ENCODE measurements at regions of chr22 and their contacts with region 1.

Region 1: GRCh38 chr22:46122511-46122971 is 27.8 kb upstream of the PPARA start:
- DNase-seq: peak; percentile 56
- H3K4me3 Mint-ChIP-seq: no peak overlapping the region
- H3K27ac Mint-ChIP-seq: no peak overlapping the region
- H3K4me1 Mint-ChIP-seq: no peaks in the 10 kb centered on the region
- H3K27me3 Mint-ChIP-seq: peaks cover 2% of the 10 kb centered on the region

Region 2: GRCh38 chr22:46092646-46093410 is 29.7 kb before region 1 on chr22:
- intact Hi-C with region 1: no loop called
- DNase-seq: no peak
- H3K4me3 Mint-ChIP-seq: no peak overlapping the region
- H3K27ac Mint-ChIP-seq: no peak overlapping the region
- H3K4me1 Mint-ChIP-seq: no peaks in the 10 kb centered on the region
- H3K27me3 Mint-ChIP-seq: no peaks in the 10 kb centered on the region

Region 3: GRCh38 chr22:46150034-46150654 is 27.6 kb after region 1 on chr22 and contains the start of gene PPARA:
- intact Hi-C with region 1: loop called (anchors 1 kb)
- DNase-seq: peak; percentile 88
- H3K4me3 Mint-ChIP-seq: peak within 1 kb of the TSS; percentile 85
- H3K27ac Mint-ChIP-seq: peak within 1 kb of the TSS; percentile 63
- H3K4me1 Mint-ChIP-seq: peaks cover 18% of the 10 kb centered on the region
- H3K27me3 Mint-ChIP-seq: peaks cover 21% of the 10 kb centered on the region
- total RNA-seq, gene PPARA: 11.6 and 14.3 TPM in 2 replicates

Region 4: DNA sequence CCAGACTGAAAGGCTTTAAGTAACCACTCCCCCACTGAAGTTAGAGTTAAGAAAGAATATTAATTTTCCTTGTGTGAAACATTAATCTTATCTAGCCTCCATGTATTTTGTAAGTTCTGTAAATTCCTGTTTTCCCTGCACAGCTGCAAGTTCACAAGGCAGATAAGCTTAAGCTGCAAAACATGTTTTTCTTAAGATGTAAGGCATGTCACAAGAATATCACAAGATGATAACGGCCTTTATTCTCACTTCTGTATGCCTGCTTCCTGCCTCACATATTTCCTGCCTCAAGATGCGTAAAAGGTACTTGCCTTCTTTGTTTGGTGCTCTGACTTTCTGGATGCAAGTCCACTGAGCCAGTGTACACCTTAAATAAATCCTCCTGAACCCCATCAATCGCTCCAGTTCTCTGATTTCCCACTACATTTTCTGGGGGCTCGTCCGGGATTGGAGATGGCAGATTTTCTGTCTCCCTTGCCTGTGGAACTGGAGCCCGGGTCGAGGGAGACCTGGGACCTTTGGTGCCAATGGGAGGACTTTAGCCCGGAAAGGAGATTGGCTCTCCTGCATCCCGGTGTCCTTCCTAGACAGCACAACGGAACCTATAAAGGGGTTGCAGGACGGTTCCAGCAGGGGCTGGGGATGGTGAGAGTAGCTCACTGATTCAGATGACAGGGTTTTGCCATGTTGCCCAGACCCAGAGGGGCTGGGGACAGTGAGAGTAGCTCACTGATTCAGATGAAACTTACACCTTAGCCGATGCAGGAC is 58.0 kb after region 1 on chr22:
- intact Hi-C with region 1: no loop called
- DNase-seq: no peak
- H3K4me3 Mint-ChIP-seq: no peak overlapping the region
- H3K27ac Mint-ChIP-seq: no peak overlapping the region
- H3K4me1 Mint-ChIP-seq: no peaks in the 10 kb centered on the region
- H3K27me3 Mint-ChIP-seq: no peaks in the 10 kb centered on the region

Region 5: DNA sequence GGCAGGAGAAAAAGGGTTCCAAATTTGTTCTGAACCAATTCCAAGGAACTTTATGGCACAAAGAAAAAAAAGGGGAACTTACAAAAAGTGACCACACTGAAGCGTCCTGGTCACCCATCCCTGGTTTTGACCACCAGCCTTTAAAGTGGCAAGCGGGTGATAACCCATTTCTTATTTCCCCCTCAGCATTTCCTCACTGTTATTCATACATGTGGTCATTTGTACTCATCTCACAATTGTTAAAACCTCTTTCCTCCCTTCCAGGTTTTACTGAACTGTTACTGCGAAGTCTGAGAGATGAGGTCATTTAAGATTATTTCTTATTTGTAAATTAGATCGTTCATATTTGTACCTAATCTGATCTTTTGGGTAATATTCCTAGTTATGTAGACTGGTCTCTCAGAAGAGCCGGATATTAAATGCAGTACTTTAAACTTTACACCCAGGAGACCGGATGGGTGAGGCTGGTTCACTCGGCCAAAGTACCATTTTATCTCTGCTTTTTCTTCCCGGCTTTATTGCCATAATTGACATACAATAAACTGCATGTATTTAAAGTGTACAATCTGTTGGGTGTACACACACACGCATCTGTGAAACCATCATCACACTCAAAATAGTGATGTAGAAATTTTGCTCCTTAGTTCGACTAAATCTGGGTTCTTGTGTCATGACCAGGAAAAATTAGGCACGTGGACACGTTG is 80.5 kb after region 1 on chr22:
- intact Hi-C with region 1: no loop called
- DNase-seq: no peak
- H3K4me3 Mint-ChIP-seq: no peak overlapping the region
- H3K27ac Mint-ChIP-seq: no peak overlapping the region
- H3K4me1 Mint-ChIP-seq: no peaks in the 10 kb centered on the region
- H3K27me3 Mint-ChIP-seq: no peaks in the 10 kb centered on the region

Region 6: DNA sequence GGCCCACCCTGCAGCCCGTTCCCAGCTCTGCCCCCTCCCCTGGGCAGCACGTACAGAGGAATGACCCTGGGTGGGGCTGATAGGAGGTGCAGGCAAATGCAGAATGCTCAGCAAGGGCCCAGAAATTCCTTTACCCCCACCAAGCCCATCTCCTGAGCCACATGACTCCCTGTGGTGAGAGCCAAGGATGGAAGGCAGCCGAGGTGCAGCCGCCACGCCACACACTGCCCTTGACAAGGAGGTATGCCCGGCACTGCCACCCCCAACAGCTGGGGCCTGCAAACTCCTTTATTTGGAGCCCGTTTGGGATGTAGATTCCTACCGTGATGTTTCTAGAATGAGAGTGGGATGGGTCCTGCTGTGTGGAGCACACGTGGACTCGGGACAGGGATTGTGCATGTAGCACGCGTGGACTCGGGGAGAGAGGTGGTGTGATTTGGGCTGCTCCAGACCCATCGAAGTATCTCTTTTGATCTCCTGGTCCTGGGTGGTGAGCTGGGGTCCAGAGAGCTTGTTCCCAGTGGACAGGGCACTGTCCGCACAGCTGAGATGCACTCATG is 187.1 kb after region 1 on chr22:
- intact Hi-C with region 1: loop called (anchors 1 kb)
- DNase-seq: no peak
- H3K4me3 Mint-ChIP-seq: no peak overlapping the region
- H3K27ac Mint-ChIP-seq: no peak overlapping the region
- H3K4me1 Mint-ChIP-seq: no peaks in the 10 kb centered on the region
- H3K27me3 Mint-ChIP-seq: no peaks in the 10 kb centered on the region

Region 7: DNA sequence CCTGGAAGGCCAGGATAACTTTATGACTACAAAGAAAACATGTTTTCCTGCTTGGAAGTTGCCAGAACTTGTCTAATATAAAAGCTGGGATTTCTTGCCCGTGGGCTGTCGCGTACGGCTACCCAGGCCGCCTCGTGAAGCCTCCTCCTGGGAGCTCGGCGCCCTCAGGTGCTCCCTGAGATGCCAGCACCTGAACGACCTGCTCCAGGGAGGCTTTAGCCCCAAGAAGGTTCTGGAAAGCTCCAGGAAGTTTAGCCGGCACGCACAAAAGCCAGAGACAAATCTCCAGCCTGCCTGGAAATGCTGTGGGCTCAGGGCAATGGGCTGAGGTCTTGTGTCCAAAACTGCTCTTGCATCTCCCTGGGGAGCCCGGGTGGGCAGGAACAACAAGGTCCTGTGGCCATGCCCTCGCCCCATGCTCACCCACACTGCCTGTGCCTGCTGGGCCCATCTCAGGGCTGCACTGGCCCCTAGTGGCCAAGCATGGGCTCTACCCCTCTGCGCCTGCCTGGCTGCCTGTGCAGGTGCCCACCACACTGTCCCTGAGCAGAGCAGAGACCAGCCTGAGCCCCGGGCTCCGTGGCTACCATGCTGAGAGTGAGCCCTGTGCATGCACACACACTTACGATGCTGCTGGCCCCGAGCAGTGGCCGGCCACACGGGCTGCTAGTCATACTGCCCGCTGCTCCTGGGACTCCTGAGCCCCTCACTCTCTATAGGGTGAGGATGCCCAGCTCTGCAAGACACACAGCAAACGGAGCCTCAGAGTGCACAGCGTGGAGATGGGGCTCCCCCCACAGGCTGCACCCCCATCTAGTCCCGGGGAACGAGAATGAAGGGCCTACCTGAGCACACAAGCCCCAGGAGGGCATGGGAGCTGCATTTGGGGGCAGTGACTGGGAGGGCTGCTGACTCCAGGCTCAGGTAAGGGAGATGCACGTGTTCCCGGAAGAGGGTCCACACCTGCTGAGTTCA is 419.8 kb after region 1 on chr22:
- intact Hi-C with region 1: loop called (anchors 5 kb)
- DNase-seq: peak; percentile 54
- H3K4me3 Mint-ChIP-seq: no peak overlapping the region
- H3K27ac Mint-ChIP-seq: no peak overlapping the region
- H3K4me1 Mint-ChIP-seq: peaks cover 18% of the 10 kb centered on the region
- H3K27me3 Mint-ChIP-seq: peaks cover 42% of the 10 kb centered on the region

Measured in activated T-helper 1 cell treated with anti-CD3 and anti-CD28 coated beads, Interleukin-12 subunit alpha, Interleukin-12 subunit beta, Interleukin-2, Interleukin-4 antibody, amounts not matched to agents 30 ng/mL and 10 ng/mL and 1 ng/mL, durations not matched to agents 14 hours and 24 hours and 36 hours (primary cell).